AG04449 (cell line): ENCODE measurements at regions of chr3 and their contacts with region 1.

Region 1: GRCh38 chr3:129650256-129650872 is 43.9 kb upstream of the PLXND1 start:
- DNase-seq: peak; percentile 61
- H3K4me3 ChIP-seq: no peak overlapping the region
- CTCF ChIP-seq: peak; percentile 67

Region 2: GRCh38 chr3:129627429-129628168 is 22.8 kb before region 1 on chr3:
- CTCF ChIA-PET with region 1: interaction called, 24 read pairs
- POLR2A ChIA-PET with region 1: no interaction called
- DNase-seq: no peak
- H3K4me3 ChIP-seq: peak overlapping the region; percentile 50
- CTCF ChIP-seq: peak; percentile 75

Region 3: DNA sequence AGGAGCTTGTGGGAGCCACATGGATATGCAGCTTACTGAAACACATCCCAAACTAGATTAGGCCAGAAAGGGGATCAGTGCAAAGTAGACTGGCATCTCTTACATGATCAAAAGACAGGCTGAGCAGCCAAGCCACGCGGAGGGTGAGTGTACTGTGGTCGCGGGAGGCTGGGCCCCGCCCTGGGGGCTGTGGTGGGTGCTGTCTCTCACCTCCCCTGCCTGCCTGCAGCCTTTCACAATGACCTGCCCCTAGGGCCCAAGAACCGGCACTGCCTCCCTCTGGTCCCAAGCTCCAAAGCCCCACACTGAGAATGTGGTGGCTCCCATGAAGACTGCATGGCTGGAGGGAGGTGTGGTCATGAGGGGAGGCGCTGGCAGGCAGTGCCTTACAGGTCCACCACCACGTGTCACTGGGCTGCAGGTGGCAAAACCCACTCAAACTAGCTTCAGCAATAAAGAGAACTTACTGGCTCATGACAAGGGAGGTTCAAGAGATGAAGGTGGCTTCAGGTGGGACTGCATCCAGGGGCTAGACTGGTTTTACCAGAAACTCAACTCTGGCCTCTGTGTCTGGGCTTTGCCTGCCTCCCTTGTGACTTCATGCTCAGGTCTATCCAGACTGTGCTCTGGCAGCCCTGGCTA is 16.5 kb before region 1 on chr3:
- CTCF ChIA-PET with region 1: interaction called, 24 read pairs
- POLR2A ChIA-PET with region 1: no interaction called
- DNase-seq: no peak
- H3K4me3 ChIP-seq: no peak overlapping the region
- CTCF ChIP-seq: no peak